ENCODE measurements at regions of chr11 and their contacts with region 1.

Region 1: DNA sequence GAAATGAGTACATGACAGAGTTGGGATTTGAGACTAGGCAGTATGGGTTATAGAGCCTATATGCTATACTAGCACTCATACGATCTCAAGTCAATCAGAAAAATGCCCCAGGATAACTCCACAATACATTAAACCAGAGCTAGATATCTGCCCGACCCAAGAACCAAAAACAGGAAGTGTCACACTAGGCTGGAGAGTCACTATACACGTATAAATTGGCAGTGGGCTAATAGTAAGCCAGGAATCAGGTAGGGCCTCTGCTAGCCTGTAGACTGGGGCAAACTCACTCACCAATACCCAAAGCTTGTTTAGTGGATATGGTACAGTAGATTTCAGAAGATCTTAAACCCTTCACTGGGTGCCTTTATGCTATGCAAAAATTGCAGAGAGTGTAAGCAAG is 16.2 kb upstream of the EIF4G2 start:
- DNase-seq: no peak
- ATAC-seq: no peak
- H3K4me3 Mint-ChIP-seq: no peak overlapping the region
- H3K27ac Mint-ChIP-seq: no peak overlapping the region
- H3K4me1 Mint-ChIP-seq: peaks cover 8% of the 10 kb centered on the region
- H3K27me3 Mint-ChIP-seq: no peaks in the 10 kb centered on the region

Region 2: GRCh38 chr11:10847960-10848870 is 23.3 kb after region 1 on chr11:
- CTCF ChIA-PET with region 1: no interaction called
- POLR2A ChIA-PET with region 1: no interaction called
- intact Hi-C with region 1: loop called in 1 of 2 experiments (anchors 2 kb)
- DNase-seq: no peak
- ATAC-seq: no peak
- H3K4me3 Mint-ChIP-seq: no peak overlapping the region
- H3K27ac Mint-ChIP-seq: no peak overlapping the region
- H3K4me1 Mint-ChIP-seq: peaks cover 12% of the 10 kb centered on the region
- H3K27me3 Mint-ChIP-seq: no peaks in the 10 kb centered on the region

Region 3: GRCh38 chr11:10906513-10906912 is 81.6 kb after region 1 on chr11:
- CTCF ChIA-PET with region 1: no interaction called
- POLR2A ChIA-PET with region 1: no interaction called
- intact Hi-C with region 1: no loop called
- DNase-seq: no peak
- ATAC-seq: no peak
- H3K4me3 Mint-ChIP-seq: no peak overlapping the region
- H3K27ac Mint-ChIP-seq: no peak overlapping the region
- H3K4me1 Mint-ChIP-seq: no peaks in the 10 kb centered on the region
- H3K27me3 Mint-ChIP-seq: peaks cover 5% of the 10 kb centered on the region